Activated CD4-positive, alpha-beta T cell treated with anti-CD3 and anti-CD28 coated beads for 36 hours (primary cell): ENCODE measurements at regions of chr2 and their contacts with region 1.

Region 1: GRCh38 chr2:231713730-231714430 is 5.6 kb downstream of the PTMA start:
- DNase-seq: peak; percentile 96
- ATAC-seq: peak; percentile 45
- H3K4me3 Mint-ChIP-seq: peak overlapping the region; percentile 44
- H3K27ac Mint-ChIP-seq: peak overlapping the region; percentile 93
- H3K4me1 Mint-ChIP-seq: peaks cover 37% of the 10 kb centered on the region
- H3K27me3 Mint-ChIP-seq: no peaks in the 10 kb centered on the region

Region 2: DNA sequence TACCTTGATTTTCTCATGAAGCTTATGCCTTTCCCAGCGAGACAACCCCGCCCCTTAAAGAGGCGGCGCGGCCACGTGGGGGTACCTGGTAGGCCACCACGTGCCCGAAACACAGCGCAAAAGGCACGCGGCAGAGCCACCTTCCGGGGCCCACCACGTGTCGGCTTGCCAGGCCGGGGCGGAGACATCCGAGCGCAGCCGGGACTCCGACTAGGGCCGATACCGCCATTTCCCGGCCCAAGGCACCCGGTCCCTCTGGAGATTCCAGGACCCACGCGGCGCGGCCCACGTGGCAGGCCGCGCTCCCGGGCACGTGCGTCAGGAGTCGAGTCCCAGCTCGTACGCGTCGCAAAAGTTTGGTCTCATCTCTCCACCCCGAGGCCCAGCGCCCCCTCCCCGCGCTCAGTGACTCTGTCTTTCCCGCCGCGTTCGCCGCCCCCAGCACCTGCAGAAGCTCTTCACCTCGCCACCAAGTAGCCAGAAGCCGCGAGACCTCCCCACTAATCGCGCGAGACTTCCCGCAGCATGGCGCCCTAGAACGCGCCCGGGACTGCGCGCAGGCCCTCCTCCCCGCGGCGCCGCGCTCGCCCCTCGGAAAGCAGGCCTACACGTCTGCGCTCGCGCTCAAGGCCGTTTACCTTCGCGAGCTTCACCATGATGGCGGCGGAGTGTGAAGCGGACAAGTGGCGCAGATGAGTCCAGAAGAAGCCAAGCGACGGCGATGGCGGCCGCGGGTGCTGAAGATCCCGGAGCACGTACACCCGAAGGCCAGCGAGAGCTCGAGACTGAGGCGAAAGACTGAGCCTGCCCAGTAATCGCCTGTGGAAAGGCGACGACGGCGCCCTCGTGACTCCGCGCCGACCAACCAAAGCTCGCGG is 249.9 kb before region 1 on chr2 and contains the start of gene NCL:
- CTCF ChIA-PET with region 1: interaction called, 10 read pairs
- POLR2A ChIA-PET with region 1: interaction called, 24 read pairs
- intact Hi-C with region 1: loop called (anchors 1 to 2 kb)
- DNase-seq: peak; percentile 92
- ATAC-seq: peak; percentile 93
- H3K4me3 Mint-ChIP-seq: peak within 1 kb of the TSS; percentile 98
- H3K27ac Mint-ChIP-seq: peak within 1 kb of the TSS; percentile 99
- H3K4me1 Mint-ChIP-seq: peaks cover 42% of the 10 kb centered on the region
- H3K27me3 Mint-ChIP-seq: no peaks in the 10 kb centered on the region
- total RNA-seq, gene NCL: 1,311 to 1,332 TPM

Region 3: GRCh38 chr2:231563378-231563961 is 150.4 kb before region 1 on chr2:
- CTCF ChIA-PET with region 1: interaction called, 7 read pairs
- POLR2A ChIA-PET with region 1: interaction called, 3 read pairs
- intact Hi-C with region 1: loop called (anchors 1 to 2 kb)
- DNase-seq: peak; percentile 79
- ATAC-seq: peak; percentile 99
- H3K4me3 Mint-ChIP-seq: no peak overlapping the region
- H3K27ac Mint-ChIP-seq: no peak overlapping the region
- H3K4me1 Mint-ChIP-seq: peaks cover 2% of the 10 kb centered on the region
- H3K27me3 Mint-ChIP-seq: no peaks in the 10 kb centered on the region

Region 4: GRCh38 chr2:231662028-231662810 is 51.7 kb before region 1 on chr2:
- CTCF ChIA-PET with region 1: interaction called, 10 read pairs
- POLR2A ChIA-PET with region 1: interaction called, 4 read pairs
- intact Hi-C with region 1: no loop called
- DNase-seq: peak; percentile 98
- ATAC-seq: peak; percentile 92
- H3K4me3 Mint-ChIP-seq: peak overlapping the region; percentile 72
- H3K27ac Mint-ChIP-seq: peak overlapping the region; percentile 96
- H3K4me1 Mint-ChIP-seq: peaks cover 23% of the 10 kb centered on the region
- H3K27me3 Mint-ChIP-seq: no peaks in the 10 kb centered on the region

Region 5: GRCh38 chr2:231680287-231680991 is 33.4 kb before region 1 on chr2:
- CTCF ChIA-PET with region 1: interaction called, 260 read pairs
- POLR2A ChIA-PET with region 1: interaction called, 42 read pairs
- intact Hi-C with region 1: loop called (anchors 1 kb)
- DNase-seq: no peak
- ATAC-seq: no peak
- H3K4me3 Mint-ChIP-seq: no peak overlapping the region
- H3K27ac Mint-ChIP-seq: no peak overlapping the region
- H3K4me1 Mint-ChIP-seq: peaks cover 3% of the 10 kb centered on the region
- H3K27me3 Mint-ChIP-seq: peaks cover 14% of the 10 kb centered on the region

Region 6: GRCh38 chr2:231701456-231702373 is 12.2 kb before region 1 on chr2:
- CTCF ChIA-PET with region 1: interaction called, 18 read pairs
- POLR2A ChIA-PET with region 1: interaction called, 3 read pairs
- intact Hi-C with region 1: no loop called
- DNase-seq: no peak
- ATAC-seq: no peak
- H3K4me3 Mint-ChIP-seq: no peak overlapping the region
- H3K27ac Mint-ChIP-seq: no peak overlapping the region
- H3K4me1 Mint-ChIP-seq: peaks cover 10% of the 10 kb centered on the region
- H3K27me3 Mint-ChIP-seq: no peaks in the 10 kb centered on the region

Region 7: GRCh38 chr2:232042911-232043564 is 329.2 kb after region 1 on chr2:
- CTCF ChIA-PET with region 1: no interaction called
- POLR2A ChIA-PET with region 1: no interaction called
- intact Hi-C with region 1: no loop called
- DNase-seq: peak; percentile 10
- ATAC-seq: peak; percentile 30
- H3K4me3 Mint-ChIP-seq: no peak overlapping the region
- H3K27ac Mint-ChIP-seq: no peak overlapping the region
- H3K4me1 Mint-ChIP-seq: peaks cover 16% of the 10 kb centered on the region
- H3K27me3 Mint-ChIP-seq: no peaks in the 10 kb centered on the region

Region 8: DNA sequence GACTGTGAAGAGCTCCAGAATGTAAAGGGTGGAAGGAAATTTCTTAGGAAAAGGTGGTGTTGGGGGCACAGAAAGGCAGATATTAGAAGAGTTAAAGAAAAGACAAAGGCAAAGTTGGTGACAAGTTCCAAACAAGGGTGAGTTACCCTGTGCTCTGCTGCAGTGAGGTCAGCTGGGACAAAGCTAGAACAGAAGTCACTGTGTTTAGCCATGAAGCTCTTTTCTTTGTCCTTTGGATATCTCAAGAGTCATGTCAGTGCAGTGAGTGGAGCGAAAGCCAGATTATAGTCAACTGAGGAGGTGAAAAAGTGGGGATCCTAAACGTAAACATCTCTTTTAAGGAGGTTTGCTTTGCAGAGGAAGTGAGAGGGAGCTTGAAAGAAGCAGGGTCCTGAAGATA is 476.9 kb after region 1 on chr2:
- CTCF ChIA-PET with region 1: no interaction called
- POLR2A ChIA-PET with region 1: no interaction called
- intact Hi-C with region 1: no loop called
- DNase-seq: no peak
- ATAC-seq: no peak
- H3K4me3 Mint-ChIP-seq: no peak overlapping the region
- H3K27ac Mint-ChIP-seq: no peak overlapping the region
- H3K4me1 Mint-ChIP-seq: no peaks in the 10 kb centered on the region
- H3K27me3 Mint-ChIP-seq: no peaks in the 10 kb centered on the region